Heart left ventricle (tissue), 16 donors: ENCODE measurements at regions of chr10 and their contacts with region 1.

Region 1: DNA sequence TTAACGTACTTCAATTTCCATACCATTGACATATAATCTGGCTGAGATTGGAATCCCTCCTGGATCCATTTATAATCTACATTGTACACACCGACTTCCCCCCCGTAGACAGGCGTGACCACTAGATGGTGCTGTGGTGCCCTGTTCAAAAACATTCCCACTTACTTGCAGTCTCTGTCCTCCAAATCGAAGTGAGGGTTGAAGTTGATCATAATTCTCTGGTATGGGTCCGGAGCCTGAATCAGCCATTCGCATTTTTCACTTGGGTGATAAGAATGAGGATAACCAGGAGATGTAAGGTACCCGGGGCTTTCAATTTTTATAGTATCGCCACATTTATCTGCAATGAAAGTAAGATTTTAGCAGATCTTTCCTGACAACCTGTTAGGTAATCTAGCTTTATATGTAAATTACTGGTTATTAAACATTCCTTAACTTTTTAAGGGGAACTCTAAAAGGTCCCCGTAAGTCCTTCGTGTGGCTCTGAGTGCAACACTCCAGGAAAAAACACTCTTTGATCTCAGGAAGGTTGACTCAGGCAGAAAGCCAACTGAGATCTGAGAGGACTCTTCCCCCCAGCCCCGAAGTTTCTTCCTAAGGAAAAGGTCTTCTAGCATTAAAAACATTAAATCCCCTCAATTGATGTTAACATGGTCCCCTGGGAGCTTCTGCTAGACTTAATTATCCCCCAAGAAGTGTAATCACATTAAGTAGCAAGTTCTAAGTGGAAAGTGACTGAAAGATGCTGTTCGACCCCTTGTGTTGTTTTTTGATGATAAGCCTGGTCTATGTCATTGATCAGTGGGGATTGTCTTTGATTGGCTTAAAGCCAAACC is 3.7 kb downstream of the NRP1 start:
- DNase-seq: peak; percentile 87 to 89 (median 87)
- ATAC-seq: peak; percentile 9 to 35 (median 25)
- H3K4me3 ChIP-seq: peak overlapping the region; percentile 53 to 92 (median 88)
- H3K27ac ChIP-seq: peak overlapping the region in 11 of 12 donors; percentile 95 to 100 (median 98)
- H3K4me1 ChIP-seq: peaks cover 3 to 53% (median 40%) of the 10 kb centered on the region in 12 donors
- H3K27me3 ChIP-seq: no peaks in the 10 kb centered on the region
- CTCF ChIP-seq: peak; percentile 87 to 96 (median 91)
- POLR2A ChIP-seq: no peak

Region 2: DNA sequence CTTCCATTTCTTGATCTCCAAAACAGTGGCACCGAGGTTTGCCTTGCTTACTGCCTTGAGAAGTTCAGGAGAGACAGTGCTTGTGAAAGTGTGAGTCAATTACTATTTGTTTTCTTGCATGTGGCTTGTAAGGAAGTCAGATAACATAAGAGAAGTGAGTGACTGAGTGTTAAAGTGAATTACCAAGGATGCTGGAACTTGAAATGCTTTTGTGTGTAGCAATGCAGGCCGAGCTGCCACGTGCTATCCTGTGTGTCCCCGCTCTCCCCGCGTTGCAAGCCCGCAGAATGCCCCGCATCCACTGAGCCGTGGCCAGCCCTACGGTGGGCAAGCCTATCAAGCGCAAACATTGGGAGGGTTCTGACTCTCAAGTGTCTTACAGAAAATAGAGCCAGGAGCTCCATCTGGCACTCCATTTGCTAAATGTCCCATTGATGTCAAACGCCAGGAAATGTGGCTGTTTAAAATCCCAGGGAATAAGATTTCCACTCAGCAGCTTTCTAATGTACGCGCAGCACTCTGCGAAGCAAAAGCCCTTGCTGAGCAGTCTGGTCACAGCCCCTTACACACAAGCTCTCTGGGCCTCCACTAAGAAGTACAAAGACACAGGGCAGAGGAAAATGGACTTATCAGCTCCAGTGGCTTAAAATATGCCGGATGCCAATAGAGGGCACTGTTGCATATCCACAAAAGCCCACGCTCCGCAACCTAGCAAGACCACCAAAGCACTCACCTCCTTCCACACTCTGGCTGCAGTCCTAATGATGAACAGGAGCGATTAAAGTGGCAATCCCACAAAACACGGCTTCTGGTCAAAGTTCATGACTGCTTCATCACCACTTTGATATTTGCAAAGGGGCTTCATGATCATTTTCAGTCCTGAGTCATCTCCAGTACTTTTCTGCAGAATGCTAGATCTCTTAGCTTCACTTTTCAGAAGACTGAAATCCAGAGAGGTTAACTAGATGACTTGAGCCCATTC is 214.7 kb before region 1 on chr10:
- intact Hi-C with region 1: loop called in 1 of 10 experiments (anchors 10 kb)
- DNase-seq: peak in 2 of 5 donors; percentile 29 to 44
- ATAC-seq: peak in 3 of 4 donors; percentile 41 to 67 (median 57)
- H3K4me3 ChIP-seq: no peak overlapping the region
- H3K27ac ChIP-seq: peak overlapping the region in 3 of 12 donors; percentile 20 to 73 (median 54)
- H3K4me1 ChIP-seq: peaks cover 0 to 67% (median 12%) of the 10 kb centered on the region in 12 donors
- H3K27me3 ChIP-seq: no peaks in the 10 kb centered on the region
- CTCF ChIP-seq: peak; percentile 39 to 71 (median 56)
- POLR2A ChIP-seq: no peak

Region 3: GRCh38 chr10:33460505-33461294 is 129.9 kb after region 1 on chr10:
- intact Hi-C with region 1: loop called in 3 of 10 experiments (anchors 5 to 10 kb)
- DNase-seq: peak; percentile 63 to 84 (median 70)
- ATAC-seq: peak; percentile 94 to 97 (median 96)
- H3K4me3 ChIP-seq: no peak overlapping the region
- H3K27ac ChIP-seq: peak overlapping the region; percentile 15 to 85 (median 64)
- H3K4me1 ChIP-seq: peaks cover 0 to 35% (median 11%) of the 10 kb centered on the region in 12 donors
- H3K27me3 ChIP-seq: no peaks in the 10 kb centered on the region
- CTCF ChIP-seq: no peak
- POLR2A ChIP-seq: no peak

Region 4: GRCh38 chr10:33715303-33715975 is 384.7 kb after region 1 on chr10:
- intact Hi-C with region 1: loop called in 4 of 10 experiments (anchors 5 to 10 kb)
- DNase-seq: peak; percentile 16 to 82 (median 60)
- ATAC-seq: peak; percentile 55 to 94 (median 75)
- H3K4me3 ChIP-seq: no peak overlapping the region
- H3K27ac ChIP-seq: no peak overlapping the region
- H3K4me1 ChIP-seq: peaks cover 7 to 38% (median 23%) of the 10 kb centered on the region in 12 donors
- H3K27me3 ChIP-seq: no peaks in the 10 kb centered on the region
- CTCF ChIP-seq: peak in 1 of 12 donors; percentile 14
- POLR2A ChIP-seq: no peak

Region 5: DNA sequence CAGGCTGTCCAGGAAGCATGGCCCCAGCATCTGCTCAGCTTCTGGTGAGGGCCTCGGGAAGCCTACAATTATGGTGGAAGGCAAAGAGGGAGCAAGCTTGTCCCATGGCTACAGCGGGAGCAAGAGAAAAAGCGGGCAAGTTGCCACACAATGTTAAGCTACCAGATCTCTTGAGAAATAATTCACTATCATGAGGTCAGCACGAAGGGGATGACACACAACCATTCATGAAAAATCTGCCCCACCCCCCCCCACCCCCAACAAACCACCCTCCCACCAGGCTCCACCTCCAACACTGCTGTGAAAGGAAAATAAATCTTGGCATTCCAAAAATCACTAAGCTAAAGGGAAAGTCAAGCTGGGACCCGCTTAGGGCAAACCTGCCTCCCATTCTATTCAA is 549.5 kb after region 1 on chr10:
- intact Hi-C with region 1: loop called in 1 of 10 experiments (anchors 10 kb)
- DNase-seq: no peak
- ATAC-seq: no peak
- H3K4me3 ChIP-seq: no peak overlapping the region
- H3K27ac ChIP-seq: no peak overlapping the region
- H3K4me1 ChIP-seq: no peaks in the 10 kb centered on the region
- H3K27me3 ChIP-seq: no peaks in the 10 kb centered on the region
- CTCF ChIP-seq: no peak
- POLR2A ChIP-seq: no peak

Region 6: DNA sequence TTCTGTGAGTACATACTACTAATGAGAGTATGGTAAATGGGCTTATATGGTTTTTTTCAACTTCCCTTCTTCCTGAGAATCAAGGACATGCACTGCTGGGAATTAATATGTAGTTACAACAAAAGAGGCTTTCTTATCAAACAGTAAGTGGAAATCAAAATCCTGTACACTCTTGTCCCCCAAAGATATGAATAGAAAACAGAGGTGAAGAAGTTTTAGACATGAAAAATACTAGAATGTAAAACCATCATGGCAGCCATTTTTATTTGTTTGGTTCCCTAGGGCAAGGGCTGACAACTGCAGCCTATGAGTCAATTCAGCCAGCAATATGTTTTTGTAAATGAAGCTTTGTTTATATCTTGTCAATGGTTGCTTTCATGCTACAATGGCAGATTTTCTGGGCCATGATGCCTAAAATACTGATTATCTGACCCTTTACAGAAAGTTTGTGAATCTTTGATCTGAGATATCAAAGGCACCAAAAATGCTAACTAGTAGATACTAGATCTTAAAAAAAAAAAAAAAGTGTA is 1061.9 kb after region 1 on chr10:
- intact Hi-C with region 1: loop called in 1 of 10 experiments (anchors 5 kb)
- DNase-seq: no peak
- ATAC-seq: no peak
- H3K4me3 ChIP-seq: no peak overlapping the region
- H3K27ac ChIP-seq: no peak overlapping the region
- H3K4me1 ChIP-seq: peaks cover 0 to 12% (median 0%) of the 10 kb centered on the region in 12 donors
- H3K27me3 ChIP-seq: no peaks in the 10 kb centered on the region
- CTCF ChIP-seq: no peak
- POLR2A ChIP-seq: no peak